PC-3 (cell line): ENCODE measurements at regions of chr6 and their contacts with region 1.

Region 1: GRCh38 chr6:56046576-56046975 is 171.2 kb upstream of the BMP5 start:
- DNase-seq: peak; percentile 83
- ATAC-seq: peak; percentile 88
- H3K4me3 ChIP-seq: no peak overlapping the region
- H3K27ac ChIP-seq: no peak overlapping the region
- H3K4me1 ChIP-seq: no peaks in the 10 kb centered on the region
- H3K27me3 ChIP-seq: no peaks in the 10 kb centered on the region
- CTCF ChIP-seq: no peak

Region 2: DNA sequence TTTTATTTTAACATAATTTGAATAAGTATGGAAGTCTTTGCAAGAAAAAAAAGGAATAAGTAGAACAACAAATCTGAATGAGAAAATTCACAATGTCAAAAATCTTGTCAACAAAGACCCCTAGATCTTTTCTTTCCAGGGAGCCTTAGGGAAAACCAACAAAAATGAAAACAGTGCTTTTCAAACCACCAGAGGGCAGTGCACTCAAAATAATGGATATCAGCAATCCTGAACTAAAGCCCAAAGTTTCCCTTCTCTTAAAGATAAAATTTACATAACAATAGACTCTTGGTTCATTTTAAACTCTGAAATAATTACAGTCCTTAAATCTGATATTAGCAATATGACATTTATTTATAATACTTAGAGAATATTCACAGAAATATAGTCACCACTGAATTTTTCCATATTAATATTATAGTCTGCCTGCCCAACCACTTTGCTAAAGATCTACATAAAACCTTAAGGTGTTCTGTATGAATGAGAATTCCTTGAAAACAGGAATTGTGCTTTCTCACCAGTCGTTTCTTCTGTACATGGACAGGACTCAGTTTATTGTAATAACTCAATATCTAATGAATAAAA is 65.9 kb before region 1 on chr6:
- CTCF ChIA-PET with region 1: no interaction called
- POLR2A ChIA-PET with region 1: no interaction called
- intact Hi-C with region 1: loop called (anchors 10 kb)
- DNase-seq: peak; percentile 72
- ATAC-seq: no peak
- H3K4me3 ChIP-seq: no peak overlapping the region
- H3K27ac ChIP-seq: no peak overlapping the region
- H3K4me1 ChIP-seq: no peaks in the 10 kb centered on the region
- H3K27me3 ChIP-seq: no peaks in the 10 kb centered on the region
- CTCF ChIP-seq: peak; percentile 89

Region 3: DNA sequence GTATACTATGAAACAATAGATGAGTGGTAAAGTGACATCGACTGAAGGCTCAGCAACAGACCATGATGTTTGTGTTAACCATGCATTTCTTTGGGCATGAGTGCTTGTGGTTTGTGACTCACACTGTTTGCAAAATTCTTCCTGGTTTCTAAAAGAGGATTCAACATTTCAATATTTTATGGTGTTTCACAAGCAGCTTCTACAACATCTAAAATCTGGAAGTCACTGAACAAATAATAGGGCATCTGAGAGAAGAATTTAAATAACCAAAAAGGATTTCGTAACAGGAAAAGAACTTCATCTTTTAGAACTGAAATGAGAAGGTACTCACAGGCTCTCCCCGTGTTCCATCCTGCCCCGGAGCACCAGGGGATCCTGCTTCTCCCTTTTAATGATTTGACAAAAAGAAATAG is 54.6 kb after region 1 on chr6:
- CTCF ChIA-PET with region 1: no interaction called
- POLR2A ChIA-PET with region 1: no interaction called
- intact Hi-C with region 1: loop called (anchors 5 kb)
- DNase-seq: peak; percentile 95
- ATAC-seq: peak; percentile 99
- H3K4me3 ChIP-seq: no peak overlapping the region
- H3K27ac ChIP-seq: peak overlapping the region; percentile 83
- H3K4me1 ChIP-seq: peaks cover 26% of the 10 kb centered on the region
- H3K27me3 ChIP-seq: no peaks in the 10 kb centered on the region
- CTCF ChIP-seq: no peak

Region 4: DNA sequence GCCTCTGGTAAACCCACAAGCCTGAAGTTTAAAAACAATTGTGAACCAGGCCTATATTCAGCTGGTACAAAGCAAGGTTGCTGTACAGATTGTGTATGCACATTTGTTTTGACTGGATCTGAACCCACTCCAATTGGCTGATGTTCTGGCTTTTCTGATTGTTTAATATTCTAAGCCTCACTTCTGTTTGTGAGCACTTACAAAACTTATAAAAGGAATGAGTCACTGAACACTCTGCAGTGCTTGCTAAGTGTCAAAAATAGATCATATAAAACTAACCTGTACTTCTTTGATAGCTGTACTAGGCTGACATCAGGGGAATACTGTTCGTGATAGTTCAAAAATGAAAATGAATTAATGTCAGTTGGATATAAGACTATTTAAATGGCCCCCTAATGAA is 188.7 kb after region 1 on chr6:
- CTCF ChIA-PET with region 1: no interaction called
- POLR2A ChIA-PET with region 1: no interaction called
- intact Hi-C with region 1: loop called (anchors 10 kb)
- DNase-seq: peak; percentile 60
- ATAC-seq: peak; percentile 82
- H3K4me3 ChIP-seq: no peak overlapping the region
- H3K27ac ChIP-seq: no peak overlapping the region
- H3K4me1 ChIP-seq: peaks cover 28% of the 10 kb centered on the region
- H3K27me3 ChIP-seq: no peaks in the 10 kb centered on the region
- CTCF ChIP-seq: no peak

Region 5: GRCh38 chr6:56570413-56571359 is 524.1 kb after region 1 on chr6:
- CTCF ChIA-PET with region 1: no interaction called
- POLR2A ChIA-PET with region 1: no interaction called
- intact Hi-C with region 1: no loop called
- DNase-seq: peak; percentile 60
- ATAC-seq: peak; percentile 72
- H3K4me3 ChIP-seq: no peak overlapping the region
- H3K27ac ChIP-seq: no peak overlapping the region
- H3K4me1 ChIP-seq: no peaks in the 10 kb centered on the region
- H3K27me3 ChIP-seq: no peaks in the 10 kb centered on the region
- CTCF ChIP-seq: peak; percentile 73